T-cell (primary cell): ENCODE measurements at regions of chr7 and their contacts with region 1.

Region 1: DNA sequence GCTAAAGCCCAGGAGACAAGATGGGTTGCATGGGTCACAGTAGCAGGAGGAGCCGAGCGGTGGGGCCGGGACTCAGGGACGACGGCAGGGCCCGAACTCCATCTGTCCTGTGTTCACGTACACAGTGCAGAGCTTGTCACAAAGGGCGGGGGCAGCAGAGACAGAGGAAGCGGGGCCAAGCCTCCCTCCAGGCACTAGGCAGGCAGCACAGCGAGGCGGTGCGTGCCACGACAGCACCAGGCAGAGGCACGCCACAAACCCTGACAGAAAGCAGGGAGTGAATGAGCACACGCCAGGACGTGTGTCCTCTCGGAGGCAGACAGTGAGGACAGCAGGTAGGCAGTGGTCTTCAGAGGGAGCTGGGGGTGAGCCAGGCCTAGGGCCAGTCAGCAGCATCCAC is 177.8 kb downstream of the MAD1L1 start:
- DNase-seq: no peak
- ATAC-seq: no peak
- H3K4me3 ChIP-seq: no peak overlapping the region
- H3K4me3 Mint-ChIP-seq: no peak overlapping the region
- H3K27ac ChIP-seq: no peak overlapping the region
- H3K27ac Mint-ChIP-seq: no peak overlapping the region
- H3K4me1 ChIP-seq: peaks cover 5 to 14% of the 10 kb centered on the region in 2 experiments
- H3K4me1 Mint-ChIP-seq: peaks cover 3 to 11% (median 6%) of the 10 kb centered on the region in 3 donors
- H3K27me3 ChIP-seq: no peaks in the 10 kb centered on the region
- H3K27me3 Mint-ChIP-seq: no peaks in the 10 kb centered on the region

Region 2: GRCh38 chr7:1027242-1028030 is 1027.5 kb before region 1 on chr7:
- CTCF ChIA-PET with region 1: no interaction called
- POLR2A ChIA-PET with region 1: no interaction called
- DNase-seq: no peak
- ATAC-seq: peak in 1 of 4 experiments; percentile 1
- H3K4me3 ChIP-seq: peak overlapping the region; percentile 13 to 56
- H3K4me3 Mint-ChIP-seq: peak overlapping the region; percentile 61 to 75 (median 71)
- H3K27ac ChIP-seq: peak overlapping the region; percentile 40
- H3K27ac Mint-ChIP-seq: peak overlapping the region; percentile 49 to 82
- H3K4me1 ChIP-seq: peaks cover 0 to 32% of the 10 kb centered on the region in 2 experiments
- H3K4me1 Mint-ChIP-seq: peaks cover 26 to 55% (median 37%) of the 10 kb centered on the region in 3 donors
- H3K27me3 ChIP-seq: no peaks in the 10 kb centered on the region
- H3K27me3 Mint-ChIP-seq: no peaks in the 10 kb centered on the region

Region 3: DNA sequence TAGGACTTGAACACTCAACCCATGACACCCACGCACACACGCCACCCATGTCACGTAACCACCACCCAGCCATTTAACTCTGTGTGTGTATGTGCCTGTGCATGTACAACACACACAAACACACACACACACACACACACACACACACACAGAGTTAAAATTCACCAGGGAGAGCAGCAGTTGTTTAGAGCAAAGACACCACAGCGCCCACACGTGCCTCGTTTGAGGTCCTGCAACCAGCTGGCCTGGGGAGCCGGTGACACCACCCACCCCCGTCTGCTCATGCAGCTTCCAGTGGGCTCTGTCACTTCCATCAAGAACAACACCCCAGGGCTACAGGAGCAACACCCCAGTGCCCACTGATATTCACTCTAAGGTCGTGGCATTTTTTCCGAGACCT is 287.4 kb before region 1 on chr7:
- CTCF ChIA-PET with region 1: no interaction called
- POLR2A ChIA-PET with region 1: interaction called in 1 of 2 experiments, 17 read pairs
- DNase-seq: no peak
- ATAC-seq: no peak
- H3K4me3 ChIP-seq: no peak overlapping the region
- H3K4me3 Mint-ChIP-seq: no peak overlapping the region
- H3K27ac ChIP-seq: no peak overlapping the region
- H3K27ac Mint-ChIP-seq: no peak overlapping the region
- H3K4me1 ChIP-seq: no peaks in the 10 kb centered on the region
- H3K4me1 Mint-ChIP-seq: no peaks in the 10 kb centered on the region
- H3K27me3 ChIP-seq: peaks cover 0 to 21% of the 10 kb centered on the region in 2 experiments
- H3K27me3 Mint-ChIP-seq: peaks cover 2 to 4% of the 10 kb centered on the region in 2 donors

Region 4: GRCh38 chr7:2321020-2321419 is 266.1 kb after region 1 on chr7:
- CTCF ChIA-PET with region 1: no interaction called
- POLR2A ChIA-PET with region 1: no interaction called
- DNase-seq: no peak
- ATAC-seq: no peak
- H3K4me3 ChIP-seq: no peak overlapping the region
- H3K4me3 Mint-ChIP-seq: no peak overlapping the region
- H3K27ac ChIP-seq: no peak overlapping the region
- H3K27ac Mint-ChIP-seq: no peak overlapping the region
- H3K4me1 ChIP-seq: no peaks in the 10 kb centered on the region
- H3K4me1 Mint-ChIP-seq: no peaks in the 10 kb centered on the region
- H3K27me3 ChIP-seq: peaks cover 0 to 16% of the 10 kb centered on the region in 2 experiments
- H3K27me3 Mint-ChIP-seq: no peaks in the 10 kb centered on the region